Psoas muscle (tissue), 8 donors: ENCODE measurements at regions of chr12 and their contacts with region 1.

Region 1: GRCh38 chr12:54005853-54006686 is 2.7 kb upstream of the HOXC8 start:
- DNase-seq: peak; percentile 90 to 95
- ATAC-seq: peak; percentile 80 to 88 (median 83)
- H3K4me3 ChIP-seq: peak overlapping the region; percentile 78
- H3K27ac ChIP-seq: peak overlapping the region; percentile 95
- H3K4me1 ChIP-seq: peaks cover 24% of the 10 kb centered on the region
- H3K27me3 ChIP-seq: no peaks in the 10 kb centered on the region
- CTCF ChIP-seq: peak; percentile 95

Region 2: DNA sequence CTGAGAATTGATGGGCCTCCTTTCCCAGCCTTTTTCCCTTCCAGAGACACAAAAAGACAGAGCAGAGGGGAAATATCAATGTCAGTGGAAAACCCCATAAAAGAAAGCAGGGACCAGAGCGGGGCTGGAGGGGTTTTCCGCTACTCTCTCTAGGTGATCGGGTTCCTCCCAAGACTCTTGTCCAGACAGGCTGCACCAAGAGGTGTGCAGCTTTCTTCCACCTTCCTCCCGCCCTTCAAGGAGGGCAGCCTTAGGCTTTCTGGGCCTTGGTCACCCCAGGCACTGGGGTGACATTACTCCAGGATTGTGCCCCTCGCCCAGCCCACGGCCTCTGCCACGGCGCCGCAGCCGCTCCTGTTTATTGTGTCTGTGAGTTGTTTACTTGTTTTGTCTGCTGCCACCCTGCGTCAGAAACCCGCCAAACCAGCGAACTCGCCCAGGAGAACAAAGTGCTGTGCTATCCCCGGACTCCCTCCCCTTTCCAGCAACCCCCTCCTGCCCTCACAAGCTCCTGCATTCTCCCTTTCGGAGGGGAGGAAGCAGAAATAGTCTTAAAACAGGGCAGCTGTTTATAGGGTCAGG is 15.5 kb after region 1 on chr12:
- intact Hi-C with region 1: loop called (anchors 1 to 2 kb)
- DNase-seq: peak; percentile 57 to 85
- ATAC-seq: peak; percentile 13 to 45 (median 29)
- H3K4me3 ChIP-seq: peak overlapping the region; percentile 77
- H3K27ac ChIP-seq: peak overlapping the region; percentile 99
- H3K4me1 ChIP-seq: peaks cover 51% of the 10 kb centered on the region
- H3K27me3 ChIP-seq: no peaks in the 10 kb centered on the region
- CTCF ChIP-seq: peak; percentile 43

Region 3: DNA sequence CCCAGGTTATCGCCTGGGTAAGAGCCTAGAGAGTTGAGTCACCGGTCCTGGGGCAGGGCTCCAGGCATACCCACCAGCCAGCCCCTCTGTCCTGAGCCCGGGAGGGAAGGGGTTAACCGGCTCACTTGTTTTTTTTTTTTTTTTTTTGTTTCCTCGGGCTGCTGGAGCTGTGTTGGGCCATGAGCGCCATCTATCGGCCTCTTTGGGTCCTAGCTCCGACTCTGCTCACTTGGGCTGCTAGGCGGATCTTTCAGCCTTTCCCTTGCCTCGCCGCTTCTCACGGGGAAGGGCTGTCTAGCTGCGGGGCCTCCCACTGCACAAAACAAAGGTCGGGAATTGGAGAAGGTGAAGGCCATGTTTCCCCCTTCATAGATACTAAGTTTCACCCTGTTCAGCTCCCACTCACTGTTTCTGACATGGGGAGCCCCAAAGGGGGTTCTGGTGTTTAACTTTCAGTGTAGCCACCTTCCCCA is 185.5 kb after region 1 on chr12:
- intact Hi-C with region 1: loop called in 1 of 2 experiments (anchors 5 kb)
- DNase-seq: peak; percentile 80 to 92
- ATAC-seq: peak; percentile 75 to 81 (median 76)
- H3K4me3 ChIP-seq: peak overlapping the region; percentile 6
- H3K27ac ChIP-seq: peak overlapping the region; percentile 19
- H3K4me1 ChIP-seq: peaks cover 25% of the 10 kb centered on the region
- H3K27me3 ChIP-seq: no peaks in the 10 kb centered on the region
- CTCF ChIP-seq: peak; percentile 86

Region 4: DNA sequence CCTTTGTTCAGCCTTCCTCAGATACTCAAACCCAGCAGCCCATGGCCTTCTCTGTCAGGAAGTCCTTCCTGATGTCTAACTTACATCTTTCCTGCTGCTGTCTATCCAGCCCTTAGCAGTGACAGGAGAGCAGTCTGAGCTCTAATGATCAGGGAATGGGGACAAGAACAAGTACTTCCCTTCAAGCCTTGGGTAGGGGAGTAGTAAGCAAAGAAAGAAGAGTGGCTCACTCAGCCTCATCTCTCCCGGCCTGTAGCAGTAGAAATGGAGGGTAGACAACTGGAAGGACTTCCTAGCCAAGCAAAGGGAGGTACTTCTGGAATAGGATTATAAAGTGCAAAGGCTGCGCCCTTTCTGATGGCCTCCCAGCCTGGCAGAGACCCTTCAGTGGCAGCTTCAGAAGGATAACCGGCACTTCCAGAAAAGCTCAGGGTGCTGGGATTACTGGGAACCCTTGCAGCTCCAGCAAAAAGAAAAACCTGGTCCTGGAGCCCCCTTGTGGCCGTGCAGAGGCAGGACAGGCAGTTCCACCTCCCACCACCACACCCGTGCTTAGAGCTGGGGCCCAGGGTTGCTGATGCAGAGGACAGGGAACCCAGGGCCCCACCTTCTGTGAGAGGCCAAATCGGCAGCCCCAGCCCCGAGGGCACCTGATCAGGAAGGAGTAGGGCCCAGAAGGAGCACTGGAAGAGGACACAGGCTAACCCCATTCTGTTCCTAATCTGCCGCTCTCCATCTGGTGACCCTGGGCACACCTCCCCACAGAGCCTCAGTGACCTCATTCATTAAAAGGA is 195.1 kb after region 1 on chr12:
- intact Hi-C with region 1: loop called (anchors 2 to 5 kb)
- DNase-seq: peak; percentile 67 to 88
- ATAC-seq: peak; percentile 60 to 78 (median 66)
- H3K4me3 ChIP-seq: no peak overlapping the region
- H3K27ac ChIP-seq: no peak overlapping the region
- H3K4me1 ChIP-seq: peaks cover 18% of the 10 kb centered on the region
- H3K27me3 ChIP-seq: no peaks in the 10 kb centered on the region
- CTCF ChIP-seq: peak; percentile 97